Caco-2 (cell line): ENCODE measurements at regions of chr7 and their contacts with region 1.

Region 1: GRCh38 chr7:1065263-1066260 is 21.2 kb downstream of the GPR146 start:
- DNase-seq: peak; percentile 59 to 78
- H3K4me3 ChIP-seq: no peak overlapping the region
- H3K4me3 Mint-ChIP-seq: no peak overlapping the region
- H3K27ac Mint-ChIP-seq: no peak overlapping the region
- H3K4me1 ChIP-seq: peaks cover 14% of the 10 kb centered on the region
- H3K4me1 Mint-ChIP-seq: peaks cover 8% of the 10 kb centered on the region
- H3K27me3 ChIP-seq: no peaks in the 10 kb centered on the region
- H3K27me3 Mint-ChIP-seq: no peaks in the 10 kb centered on the region
- CTCF ChIP-seq: peak; percentile 64 to 67

Region 2: DNA sequence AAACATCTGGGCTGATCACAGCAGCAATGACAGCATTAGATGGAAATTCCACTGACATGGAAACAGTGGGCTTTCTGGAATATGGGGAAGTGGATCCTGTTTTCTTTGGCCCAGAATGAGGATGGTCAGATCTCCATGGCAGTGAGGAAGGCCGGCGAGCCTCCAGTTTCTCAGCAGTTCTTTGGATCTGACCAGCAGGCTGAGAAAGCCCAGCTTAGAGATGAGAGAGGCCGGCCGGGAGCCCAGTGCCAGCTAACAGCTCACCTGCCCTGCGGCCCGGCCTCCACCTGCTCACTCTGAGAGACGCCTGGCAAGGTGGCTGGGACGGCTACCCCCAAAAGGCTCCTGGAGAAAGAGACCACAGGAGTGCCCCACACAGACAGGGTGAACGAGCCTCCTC is 46.5 kb after region 1 on chr7:
- CTCF ChIA-PET with region 1: no interaction called
- POLR2A ChIA-PET with region 1: no interaction called
- intact Hi-C with region 1: no loop called
- DNase-seq: peak in 1 of 2 experiments; percentile 15
- H3K4me3 ChIP-seq: no peak overlapping the region
- H3K4me3 Mint-ChIP-seq: no peak overlapping the region
- H3K27ac Mint-ChIP-seq: no peak overlapping the region
- H3K4me1 ChIP-seq: no peaks in the 10 kb centered on the region
- H3K4me1 Mint-ChIP-seq: no peaks in the 10 kb centered on the region
- H3K27me3 ChIP-seq: no peaks in the 10 kb centered on the region
- H3K27me3 Mint-ChIP-seq: no peaks in the 10 kb centered on the region
- CTCF ChIP-seq: no peak

Region 3: DNA sequence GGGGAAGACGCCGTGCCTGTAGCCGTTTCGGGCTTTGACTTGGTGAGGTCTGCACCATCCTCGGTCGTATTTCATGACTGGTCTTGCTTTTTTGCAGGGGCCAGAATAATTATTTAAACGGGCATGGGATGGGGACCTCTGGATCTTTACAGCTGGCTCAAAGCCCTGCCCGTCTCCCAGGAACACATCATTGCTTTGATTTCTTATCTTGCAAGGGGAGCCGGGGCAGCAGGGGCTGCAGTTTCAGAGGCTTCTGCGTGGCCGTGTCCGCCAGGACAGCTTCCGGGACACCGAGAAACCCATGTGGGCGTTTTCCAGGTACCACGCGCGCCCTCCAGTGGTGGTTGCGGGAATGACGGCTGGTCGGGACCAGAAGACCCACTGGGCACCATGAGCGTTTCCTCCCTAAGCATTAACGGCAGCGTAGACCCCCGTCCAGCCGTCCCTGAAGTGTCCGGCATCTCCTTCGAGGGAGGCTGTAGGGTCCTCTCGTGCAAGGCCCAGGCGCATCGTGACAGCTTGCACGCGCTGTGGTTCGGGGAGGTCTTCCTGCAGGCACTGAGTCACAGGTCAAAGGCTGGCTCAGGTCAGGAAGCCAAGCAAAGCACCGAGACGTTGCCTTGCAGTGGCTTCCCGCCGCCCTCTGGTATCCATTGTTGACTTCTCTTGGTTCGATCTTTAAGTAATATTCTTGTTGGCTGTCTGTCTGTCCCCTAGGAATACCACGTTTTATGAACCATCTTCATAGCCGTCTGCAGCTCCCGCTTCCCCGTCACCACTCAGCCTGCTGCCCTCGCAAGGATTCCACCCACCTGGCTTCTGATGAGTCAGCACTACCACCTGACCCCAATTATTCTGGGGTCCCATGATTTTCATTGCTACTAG is 110.6 kb after region 1 on chr7:
- CTCF ChIA-PET with region 1: interaction called, 10 read pairs
- POLR2A ChIA-PET with region 1: no interaction called
- intact Hi-C with region 1: no loop called
- DNase-seq: peak; percentile 87 to 93
- H3K4me3 ChIP-seq: peak overlapping the region; percentile 40
- H3K4me3 Mint-ChIP-seq: peak overlapping the region; percentile 74
- H3K27ac Mint-ChIP-seq: peak overlapping the region; percentile 64
- H3K4me1 ChIP-seq: peaks cover 11% of the 10 kb centered on the region
- H3K4me1 Mint-ChIP-seq: no peaks in the 10 kb centered on the region
- H3K27me3 ChIP-seq: no peaks in the 10 kb centered on the region
- H3K27me3 Mint-ChIP-seq: no peaks in the 10 kb centered on the region
- CTCF ChIP-seq: peak; percentile 95 to 97